Activated CD4-positive, alpha-beta T cell treated with anti-CD3 and anti-CD28 coated beads, Interleukin-2, amount 10 ng/mL, durations not matched to agents 24 days and 14 days (primary cell): ENCODE measurements at regions of chr5 and their contacts with region 1.

Region 1: DNA sequence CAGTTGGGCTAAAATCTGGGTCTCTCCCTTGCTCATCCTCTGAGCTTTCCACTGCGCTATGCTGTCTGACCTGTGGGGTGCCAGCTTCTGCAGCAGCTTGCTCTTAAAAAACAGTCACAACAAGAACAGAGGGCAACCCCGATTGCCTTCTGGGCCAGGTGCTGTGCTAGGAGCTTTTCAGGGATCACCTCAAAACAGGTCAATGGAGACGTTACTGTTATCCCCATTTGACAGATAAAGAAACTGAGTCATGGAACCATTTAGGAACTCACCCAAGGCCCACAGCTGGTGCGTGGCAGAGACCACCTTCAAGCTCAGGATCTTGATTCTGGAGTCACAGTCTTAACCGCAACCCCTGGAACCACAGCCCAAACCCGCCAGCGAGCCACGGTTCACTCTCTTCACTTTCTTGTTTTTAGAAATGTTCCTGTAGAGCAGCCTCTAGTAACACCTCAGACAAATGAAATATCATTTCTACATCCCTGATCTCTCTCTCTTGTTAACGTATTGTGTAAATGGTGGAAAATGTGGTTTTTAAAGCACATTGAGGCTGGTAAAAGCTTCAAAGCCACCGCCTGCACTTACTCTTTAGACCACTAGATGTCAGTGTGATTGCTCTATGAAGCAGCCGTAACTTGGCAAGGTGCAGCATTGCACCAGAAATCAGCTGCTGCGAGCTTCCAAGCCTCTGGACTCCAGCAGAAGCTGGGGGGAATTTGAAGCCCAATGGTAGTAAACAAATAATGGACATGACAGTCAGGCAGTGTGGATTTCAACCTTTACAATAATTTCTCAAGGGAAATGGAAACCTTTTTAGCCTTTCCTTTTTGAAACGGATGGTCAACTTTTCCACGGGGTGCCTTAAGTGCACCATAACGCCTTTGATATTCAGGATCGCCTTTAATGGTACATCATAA is 1.7 kb downstream of the FYB1 start:
- DNase-seq: peak; percentile 94
- H3K4me3 Mint-ChIP-seq: peak overlapping the region; percentile 89
- H3K27ac Mint-ChIP-seq: peak overlapping the region; percentile 95
- H3K4me1 Mint-ChIP-seq: peaks cover 48% of the 10 kb centered on the region
- H3K27me3 Mint-ChIP-seq: no peaks in the 10 kb centered on the region

Region 2: DNA sequence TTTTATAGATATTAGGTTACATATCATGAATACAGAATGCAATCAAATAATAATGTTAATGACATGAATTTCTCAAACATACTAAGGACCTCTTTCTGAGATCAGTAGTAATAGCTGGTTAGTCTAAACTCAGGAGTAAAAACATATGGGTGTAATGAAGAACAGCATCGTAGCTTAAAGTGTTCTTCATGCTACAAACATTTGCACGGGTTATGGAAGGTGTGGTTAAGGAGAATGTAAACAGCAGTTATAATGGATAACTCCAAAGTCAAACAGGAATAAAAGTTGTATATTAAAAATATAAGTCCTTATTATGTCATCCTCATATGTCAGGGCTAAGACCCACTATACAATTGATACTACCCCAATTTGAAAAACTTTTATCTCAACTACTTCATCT is 255.9 kb before region 1 on chr5:
- intact Hi-C with region 1: no loop called
- DNase-seq: no peak
- H3K4me3 Mint-ChIP-seq: no peak overlapping the region
- H3K27ac Mint-ChIP-seq: no peak overlapping the region
- H3K4me1 Mint-ChIP-seq: no peaks in the 10 kb centered on the region
- H3K27me3 Mint-ChIP-seq: no peaks in the 10 kb centered on the region

Region 3: DNA sequence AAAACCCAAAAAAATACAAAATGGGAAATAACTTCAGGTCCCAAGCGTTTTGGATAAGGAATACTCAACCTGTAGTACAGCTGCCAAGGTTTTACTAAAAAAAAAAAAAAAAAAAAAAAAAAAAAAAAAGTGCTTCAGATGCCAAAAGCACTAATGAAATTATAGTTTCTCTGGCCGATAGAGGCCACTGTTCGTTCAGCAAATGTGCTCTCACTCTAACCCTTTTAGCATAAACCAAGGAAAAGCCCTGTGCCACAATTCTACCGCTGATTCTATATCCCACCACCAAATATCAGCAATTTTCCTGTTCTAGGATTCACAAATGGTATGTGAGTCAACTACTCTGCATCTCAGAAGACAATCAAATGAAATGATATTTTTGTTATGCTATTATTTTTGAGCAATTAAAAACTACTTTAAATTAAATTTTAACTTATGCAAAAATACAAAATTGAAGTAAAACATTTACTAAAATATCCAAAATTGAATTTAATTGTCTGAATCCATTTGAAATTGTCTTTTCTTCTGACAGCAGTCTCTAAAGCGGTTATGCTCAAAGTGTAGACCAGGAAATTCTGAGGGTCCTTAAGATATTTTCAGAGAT is 223.2 kb before region 1 on chr5:
- intact Hi-C with region 1: loop called (anchors 10 kb)
- DNase-seq: peak; percentile 75
- H3K4me3 Mint-ChIP-seq: no peak overlapping the region
- H3K27ac Mint-ChIP-seq: no peak overlapping the region
- H3K4me1 Mint-ChIP-seq: peaks cover 9% of the 10 kb centered on the region
- H3K27me3 Mint-ChIP-seq: no peaks in the 10 kb centered on the region

Region 4: DNA sequence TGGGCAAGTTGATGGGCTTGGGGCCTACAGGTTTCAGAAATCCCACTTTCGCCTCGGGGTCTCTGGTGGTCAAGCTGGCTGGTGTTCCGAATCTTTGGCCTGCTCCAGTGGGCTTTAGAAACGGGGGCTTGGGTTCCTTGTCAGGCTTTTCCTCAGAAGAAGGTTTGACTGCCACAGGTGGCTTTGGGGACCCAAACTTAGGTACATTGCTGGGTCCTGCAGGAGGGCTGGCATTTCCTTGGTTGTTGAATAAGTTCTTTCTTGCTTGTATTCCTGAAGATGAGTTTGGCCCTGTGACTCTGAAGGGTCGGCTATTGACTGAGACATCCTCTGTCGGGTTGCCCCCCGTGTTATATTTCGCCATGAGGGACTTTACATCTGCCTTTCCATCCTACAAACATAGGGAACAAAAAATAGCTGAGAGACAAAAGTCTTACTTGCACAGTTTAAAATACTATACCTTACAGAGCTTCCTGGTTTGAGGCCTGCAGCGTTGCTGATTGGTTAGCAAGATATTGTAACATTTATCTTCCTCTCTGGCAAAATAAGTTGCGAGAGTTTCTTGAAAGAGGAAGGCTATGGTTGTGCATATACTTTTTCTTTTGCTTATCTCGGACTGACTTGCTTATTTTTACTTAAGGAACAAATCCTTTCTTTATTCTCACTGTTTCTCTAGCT is 14.9 kb before region 1 on chr5:
- intact Hi-C with region 1: loop called (anchors 2 kb)
- DNase-seq: peak; percentile 83
- H3K4me3 Mint-ChIP-seq: peak overlapping the region; percentile 90
- H3K27ac Mint-ChIP-seq: peak overlapping the region; percentile 90
- H3K4me1 Mint-ChIP-seq: peaks cover 47% of the 10 kb centered on the region
- H3K27me3 Mint-ChIP-seq: no peaks in the 10 kb centered on the region

Region 5: DNA sequence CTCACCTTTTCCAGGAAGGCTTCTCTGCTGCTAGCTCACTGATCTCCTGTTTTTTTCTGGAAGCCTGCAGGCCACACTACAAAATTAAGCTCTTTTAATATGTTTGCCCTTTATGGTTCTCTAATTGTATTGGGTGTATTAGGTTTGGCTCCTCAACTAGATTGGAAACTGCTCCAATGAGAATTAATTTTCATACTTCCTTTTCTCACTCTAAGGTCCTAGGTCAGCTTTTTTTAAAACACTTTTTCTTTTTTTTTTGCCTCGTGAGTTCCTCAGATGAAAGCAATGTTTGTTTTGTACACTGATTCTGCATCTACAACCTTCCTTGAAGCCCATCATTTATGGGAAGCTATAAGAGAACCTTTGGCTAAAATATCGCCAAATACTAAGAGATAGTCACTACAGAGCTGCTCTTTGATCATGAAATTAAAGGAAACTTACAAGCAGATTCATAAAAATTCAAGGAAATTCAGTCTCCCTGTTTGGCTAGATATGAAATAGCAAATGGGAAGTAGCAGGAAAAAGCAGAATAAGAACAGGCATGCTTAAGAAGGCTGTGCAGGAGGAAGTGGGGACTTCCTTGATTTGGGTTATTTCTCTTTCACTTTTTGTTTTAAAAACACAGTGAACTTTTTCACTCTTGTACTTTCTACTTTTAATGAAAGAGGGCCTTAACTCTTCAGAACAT is 56.9 kb after region 1 on chr5:
- intact Hi-C with region 1: loop called (anchors 2 kb)
- DNase-seq: peak; percentile 71
- H3K4me3 Mint-ChIP-seq: peak overlapping the region; percentile 80
- H3K27ac Mint-ChIP-seq: peak overlapping the region; percentile 93
- H3K4me1 Mint-ChIP-seq: peaks cover 26% of the 10 kb centered on the region
- H3K27me3 Mint-ChIP-seq: no peaks in the 10 kb centered on the region

Region 6: GRCh38 chr5:39376293-39376714 is 158.7 kb after region 1 on chr5:
- intact Hi-C with region 1: loop called (anchors 5 kb)
- DNase-seq: peak; percentile 82
- H3K4me3 Mint-ChIP-seq: no peak overlapping the region
- H3K27ac Mint-ChIP-seq: no peak overlapping the region
- H3K4me1 Mint-ChIP-seq: no peaks in the 10 kb centered on the region
- H3K27me3 Mint-ChIP-seq: peaks cover 20% of the 10 kb centered on the region

Region 7: DNA sequence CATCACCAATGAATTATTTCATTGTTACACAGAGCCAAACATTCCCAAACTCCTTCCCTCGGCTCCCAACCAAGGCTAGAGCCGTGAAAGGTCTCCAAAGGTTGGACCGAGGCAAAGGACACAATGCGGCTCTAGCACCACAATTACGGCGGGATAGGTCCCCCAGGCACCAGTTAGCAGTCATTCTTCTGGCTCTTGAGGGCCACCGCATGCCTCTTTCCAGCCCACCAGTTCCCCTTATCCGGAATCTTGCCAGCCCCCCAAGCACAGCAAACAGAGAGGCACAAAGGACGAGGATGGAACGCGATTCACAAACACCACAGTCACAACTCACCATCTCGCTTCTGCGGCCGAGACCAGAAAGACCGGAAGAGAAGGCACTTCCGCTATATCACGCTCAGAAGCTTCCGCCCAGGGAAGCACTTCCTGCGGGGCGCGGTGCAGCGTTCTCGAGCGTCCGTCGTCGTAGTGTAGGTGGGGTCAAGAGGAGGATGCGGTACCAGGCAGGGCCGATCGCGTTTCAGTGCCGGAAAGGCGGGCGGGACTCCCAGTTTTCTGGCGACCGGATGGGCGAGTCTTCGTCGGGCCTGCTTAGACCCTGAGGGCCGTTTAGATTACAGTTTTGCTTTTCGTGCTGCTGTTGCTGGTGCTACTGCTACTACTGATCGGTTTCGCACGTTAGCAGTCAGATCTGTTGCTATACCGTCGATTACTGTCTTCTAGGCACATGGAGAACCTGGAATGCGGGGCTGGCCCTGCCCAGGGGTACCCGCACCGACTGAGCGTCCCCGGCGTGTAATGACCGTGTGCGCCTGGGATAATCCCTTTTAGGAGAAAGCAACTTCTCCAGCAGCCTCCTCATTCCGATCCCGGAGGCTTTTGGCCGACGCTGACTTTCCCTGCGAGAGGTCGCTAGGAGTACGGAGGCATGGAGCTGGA is 1617.5 kb after region 1 on chr5 and contains the start of gene RPL37:
- intact Hi-C with region 1: loop called (anchors 10 kb)
- DNase-seq: peak; percentile 97
- H3K4me3 Mint-ChIP-seq: peak within 1 kb of the TSS; percentile 97
- H3K27ac Mint-ChIP-seq: peak within 1 kb of the TSS; percentile 99
- H3K4me1 Mint-ChIP-seq: peaks cover 43% of the 10 kb centered on the region
- H3K27me3 Mint-ChIP-seq: no peaks in the 10 kb centered on the region
- total RNA-seq, gene RPL37: 1,546 and 1,565 TPM in 2 replicates